ENCODE measurements at regions of chr2 and their contacts with region 1.

Region 1: DNA sequence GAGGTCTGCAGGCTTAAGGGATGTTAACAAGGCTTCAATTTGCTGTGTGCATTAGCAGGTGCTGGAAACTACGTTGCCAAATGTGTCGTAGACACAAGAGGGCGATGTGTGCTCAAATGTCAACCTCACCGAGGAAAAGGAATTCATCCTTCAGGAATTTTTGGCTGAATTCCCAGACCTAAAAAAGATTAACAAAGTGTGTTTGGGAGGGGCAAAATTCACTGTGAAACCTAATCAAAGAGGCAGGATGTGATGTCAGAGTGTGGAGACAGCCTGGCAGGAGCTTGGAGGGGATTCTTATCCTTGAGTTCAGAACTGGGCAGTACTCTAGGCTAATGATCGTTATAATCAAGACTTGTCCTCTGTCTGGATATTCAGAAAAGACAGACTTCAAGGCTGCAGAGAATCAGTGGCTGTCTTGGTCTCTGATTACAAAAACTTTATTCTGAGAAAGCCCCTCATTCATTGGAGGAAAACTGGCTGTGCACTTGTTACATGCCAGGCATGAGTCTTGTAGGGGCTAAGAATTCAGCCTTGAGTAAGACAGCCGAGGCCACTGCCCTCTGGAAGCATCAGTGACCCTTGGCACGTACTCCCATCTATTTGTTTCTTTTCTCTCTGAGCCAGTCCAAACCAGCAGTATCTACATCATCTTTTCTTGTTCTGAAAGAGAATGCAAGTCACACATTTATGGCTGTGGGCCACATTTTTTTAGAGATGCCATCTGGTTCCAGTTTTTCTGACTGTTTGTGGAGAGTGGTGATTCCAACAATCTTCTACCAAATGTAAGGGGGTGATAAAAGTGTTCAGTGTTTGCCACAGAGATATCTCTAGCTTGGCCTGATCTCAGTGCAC is 18.7 kb upstream of the SCYGR1 start:
- DNase-seq: no peak
- ATAC-seq: peak; percentile 67
- H3K4me3 ChIP-seq: no peak overlapping the region
- H3K27ac ChIP-seq: no peak overlapping the region
- H3K4me1 ChIP-seq: peaks cover 14% of the 10 kb centered on the region
- H3K27me3 ChIP-seq: no peaks in the 10 kb centered on the region
- CTCF ChIP-seq: peak; percentile 61 to 90 (median 74)
- EP300 ChIP-seq: no peak
- POLR2A ChIP-seq: no peak
- RAD21 ChIP-seq: peak; percentile 85

Region 2: DNA sequence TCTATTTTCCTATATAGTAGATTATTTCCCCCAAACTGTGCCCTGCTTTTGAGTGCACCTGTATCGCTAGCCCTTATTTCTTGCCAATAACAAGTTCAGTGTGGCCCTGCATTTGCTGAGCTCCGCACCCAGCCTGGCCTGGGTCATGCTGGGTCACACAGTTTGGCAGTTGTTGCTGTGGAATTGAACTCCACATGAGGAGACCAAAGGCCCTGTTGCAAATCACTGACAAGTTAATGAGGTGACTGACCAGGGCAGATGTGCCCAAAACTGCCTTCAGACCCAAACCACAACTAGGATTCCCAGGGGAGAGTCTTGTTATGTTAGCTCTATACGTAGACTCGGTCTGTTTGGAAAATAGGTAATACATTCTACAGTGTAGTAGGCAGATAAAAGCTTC is 273.4 kb before region 1 on chr2:
- CTCF ChIA-PET with region 1: no interaction called
- POLR2A ChIA-PET with region 1: no interaction called
- RAD21 ChIA-PET with region 1: no interaction called
- SMC1A ChIA-PET with region 1: interaction called, 3 read pairs
- in situ Hi-C with region 1: no loop called
- intact Hi-C with region 1: loop called (anchors 10 kb)
- DNase-seq: no peak
- ATAC-seq: no peak
- H3K4me3 ChIP-seq: no peak overlapping the region
- H3K27ac ChIP-seq: no peak overlapping the region
- H3K4me1 ChIP-seq: no peaks in the 10 kb centered on the region
- H3K27me3 ChIP-seq: no peaks in the 10 kb centered on the region
- CTCF ChIP-seq: no peak
- EP300 ChIP-seq: no peak
- POLR2A ChIP-seq: no peak
- RAD21 ChIP-seq: no peak

Region 3: DNA sequence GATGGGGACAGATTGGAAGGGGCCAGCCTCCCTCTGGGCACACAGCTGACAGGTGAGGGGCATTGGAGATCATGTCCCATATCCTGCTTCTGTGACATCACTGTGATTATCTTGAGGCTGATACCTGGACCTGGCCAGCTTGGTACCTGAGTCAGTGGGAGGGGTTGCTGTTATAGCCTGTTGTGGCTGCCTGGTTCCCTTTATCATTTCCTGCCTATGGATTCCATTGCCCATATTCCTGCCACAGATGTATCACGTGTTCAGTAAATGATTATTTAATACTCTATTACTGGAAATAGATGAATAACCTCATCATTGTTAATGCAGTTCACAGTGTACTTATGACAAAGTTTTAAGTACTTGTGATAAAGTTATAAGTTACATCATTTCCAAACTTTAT is 10.8 kb before region 1 on chr2:
- CTCF ChIA-PET with region 1: interaction called, 27 read pairs
- POLR2A ChIA-PET with region 1: no interaction called
- RAD21 ChIA-PET with region 1: interaction called, 3 read pairs
- SMC1A ChIA-PET with region 1: interaction called, 16 read pairs
- in situ Hi-C with region 1: no loop called
- intact Hi-C with region 1: no loop called
- DNase-seq: no peak
- ATAC-seq: peak; percentile 40
- H3K4me3 ChIP-seq: no peak overlapping the region
- H3K27ac ChIP-seq: no peak overlapping the region
- H3K4me1 ChIP-seq: no peaks in the 10 kb centered on the region
- H3K27me3 ChIP-seq: no peaks in the 10 kb centered on the region
- CTCF ChIP-seq: no peak
- EP300 ChIP-seq: no peak
- POLR2A ChIP-seq: no peak
- RAD21 ChIP-seq: no peak

Region 4: DNA sequence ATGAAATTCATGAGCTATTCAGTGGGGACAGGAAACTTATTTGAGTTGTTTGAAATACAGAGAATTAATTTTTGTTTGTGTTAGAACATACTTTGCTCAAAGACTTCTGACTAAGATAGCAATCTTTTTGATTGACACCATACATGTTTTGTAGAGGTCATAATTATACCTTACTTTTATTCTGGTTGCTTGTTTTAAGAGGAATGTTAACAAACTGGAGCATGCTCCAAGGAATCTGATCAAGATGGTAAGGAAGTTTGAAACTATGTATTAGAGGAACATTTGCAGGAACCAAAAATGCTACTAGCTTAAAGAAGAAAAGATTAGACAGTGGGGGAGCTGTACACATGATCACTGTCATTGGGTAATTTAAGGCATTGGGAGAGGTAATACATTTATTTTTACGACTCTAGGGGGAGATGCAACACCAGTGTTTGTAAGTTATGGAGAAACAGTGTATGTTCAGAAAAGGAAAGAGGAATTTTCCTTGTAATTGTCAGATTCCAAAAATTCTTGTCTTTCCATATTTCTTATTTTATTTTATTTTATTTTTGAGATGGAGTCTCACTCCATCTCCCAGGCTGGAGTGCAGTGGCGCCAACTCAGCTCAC is 73.6 kb after region 1 on chr2:
- CTCF ChIA-PET with region 1: interaction called, 127 read pairs
- POLR2A ChIA-PET with region 1: interaction called, 3 read pairs
- RAD21 ChIA-PET with region 1: interaction called, 61 read pairs
- SMC1A ChIA-PET with region 1: interaction called, 56 read pairs
- in situ Hi-C with region 1: no loop called
- intact Hi-C with region 1: no loop called
- DNase-seq: no peak
- ATAC-seq: peak; percentile 64
- H3K4me3 ChIP-seq: peak overlapping the region; percentile 12; the same call in 1 of the 2 replicates
- H3K27ac ChIP-seq: peak overlapping the region; percentile 68
- H3K4me1 ChIP-seq: peaks cover 32% of the 10 kb centered on the region
- H3K27me3 ChIP-seq: no peaks in the 10 kb centered on the region
- CTCF ChIP-seq: peak; percentile 28 to 65 (median 56); a peak in 5 of 6 replicates
- EP300 ChIP-seq: no peak
- POLR2A ChIP-seq: no peak
- RAD21 ChIP-seq: peak; percentile 65

Region 5: DNA sequence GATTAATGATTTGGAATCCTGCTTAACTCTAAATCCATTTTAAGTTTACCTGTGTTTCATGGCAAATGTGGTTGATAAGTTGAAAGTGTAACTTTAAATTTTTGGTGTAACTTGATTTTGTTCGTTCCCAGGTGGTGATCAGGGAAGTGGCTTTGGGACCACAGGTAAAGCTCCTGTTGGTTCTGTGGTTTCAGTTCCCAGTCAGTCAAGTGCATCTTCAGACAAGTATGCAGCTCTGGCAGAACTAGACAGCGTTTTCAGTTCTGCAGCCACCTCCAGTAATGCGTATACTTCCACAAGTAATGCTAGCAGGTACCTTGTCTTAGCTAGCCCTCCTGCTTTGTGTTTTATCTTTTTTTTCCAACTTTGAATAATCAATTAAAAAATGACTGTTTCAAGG is 128.3 kb after region 1 on chr2:
- CTCF ChIA-PET with region 1: interaction called, 19 read pairs
- POLR2A ChIA-PET with region 1: no interaction called
- RAD21 ChIA-PET with region 1: interaction called, 3 read pairs
- SMC1A ChIA-PET with region 1: interaction called, 8 read pairs
- in situ Hi-C with region 1: no loop called
- intact Hi-C with region 1: loop called (anchors 5 kb)
- DNase-seq: peak; percentile 40
- ATAC-seq: peak; percentile 86
- H3K4me3 ChIP-seq: no peak overlapping the region
- H3K27ac ChIP-seq: no peak overlapping the region
- H3K4me1 ChIP-seq: peaks cover 18% of the 10 kb centered on the region
- H3K27me3 ChIP-seq: no peaks in the 10 kb centered on the region
- CTCF ChIP-seq: no peak
- EP300 ChIP-seq: no peak
- POLR2A ChIP-seq: no peak
- RAD21 ChIP-seq: no peak

Region 6: DNA sequence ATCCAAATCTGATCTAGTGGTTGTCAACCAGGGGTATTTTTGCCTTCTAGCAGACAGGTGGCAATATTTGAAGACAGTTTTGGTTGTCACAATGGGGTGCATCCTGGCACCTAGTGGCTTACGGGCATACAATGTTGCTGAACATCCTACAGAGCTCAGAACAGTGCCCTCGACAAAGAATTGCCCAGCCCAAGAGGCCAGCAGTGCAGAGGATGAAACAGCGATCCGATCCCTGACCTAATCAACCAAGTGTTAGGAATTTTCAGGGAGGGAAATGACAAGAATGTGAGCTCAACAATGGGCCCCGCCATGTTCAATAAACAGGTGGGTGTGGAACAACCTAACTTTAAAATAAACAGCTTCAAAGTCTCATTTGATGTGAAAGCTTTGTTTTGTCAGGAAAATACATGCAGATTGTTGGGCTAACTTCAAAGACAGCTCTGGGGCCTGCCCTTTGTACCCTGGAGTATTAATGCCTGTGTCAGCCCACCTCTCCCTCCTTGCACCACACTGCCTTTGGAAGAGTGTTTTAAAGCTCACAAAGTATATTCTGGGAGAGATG is 237.7 kb after region 1 on chr2:
- CTCF ChIA-PET with region 1: interaction called, 19 read pairs
- POLR2A ChIA-PET with region 1: no interaction called
- RAD21 ChIA-PET with region 1: interaction called, 4 read pairs
- SMC1A ChIA-PET with region 1: no interaction called
- in situ Hi-C with region 1: no loop called
- intact Hi-C with region 1: no loop called
- DNase-seq: no peak
- ATAC-seq: peak; percentile 64
- H3K4me3 ChIP-seq: no peak overlapping the region
- H3K27ac ChIP-seq: no peak overlapping the region
- H3K4me1 ChIP-seq: no peaks in the 10 kb centered on the region
- H3K27me3 ChIP-seq: peaks cover 0 to 1% of the 10 kb centered on the region in 2 experiments; a peak in 1 of 4 replicates
- CTCF ChIP-seq: peak in 1 of 3 experiments; percentile 31; a peak in 1 of 6 replicates
- EP300 ChIP-seq: no peak
- POLR2A ChIP-seq: no peak
- RAD21 ChIP-seq: no peak

Region 7: DNA sequence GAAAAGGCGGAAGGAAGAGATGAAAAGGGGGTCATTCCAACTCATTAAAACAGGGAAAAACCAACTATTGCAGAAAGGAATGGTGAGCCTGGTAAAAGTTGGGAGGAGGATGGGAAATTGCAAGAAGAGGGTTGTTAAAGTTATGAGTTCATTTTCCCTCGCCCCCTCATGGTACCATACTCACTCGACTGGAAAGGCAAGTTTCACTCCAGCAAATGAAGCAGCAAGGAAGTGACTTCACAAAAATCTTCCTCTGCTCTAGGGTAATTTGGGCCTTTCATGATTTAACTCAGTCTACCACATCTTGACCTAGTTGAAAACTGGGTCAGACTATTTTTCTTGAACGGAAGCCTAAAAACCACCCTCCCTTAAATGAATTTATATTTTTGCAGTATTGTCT is 442.2 kb after region 1 on chr2:
- CTCF ChIA-PET with region 1: no interaction called
- POLR2A ChIA-PET with region 1: no interaction called
- RAD21 ChIA-PET with region 1: interaction called, 3 read pairs
- SMC1A ChIA-PET with region 1: no interaction called
- in situ Hi-C with region 1: no loop called
- intact Hi-C with region 1: loop called (anchors 10 kb)
- DNase-seq: peak; percentile 80
- ATAC-seq: peak; percentile 95
- H3K4me3 ChIP-seq: peak overlapping the region; percentile 20; the same call in 1 of the 2 replicates
- H3K27ac ChIP-seq: peak overlapping the region; percentile 38
- H3K4me1 ChIP-seq: peaks cover 8% of the 10 kb centered on the region; the same call in 1 of the 2 replicates
- H3K27me3 ChIP-seq: no peaks in the 10 kb centered on the region
- CTCF ChIP-seq: no peak
- EP300 ChIP-seq: 0 out of 4 replicates have a peak, but pooled peaks of 1 of the 2 experiments have one; percentile 50
- POLR2A ChIP-seq: no peak
- RAD21 ChIP-seq: no peak

Region 8: DNA sequence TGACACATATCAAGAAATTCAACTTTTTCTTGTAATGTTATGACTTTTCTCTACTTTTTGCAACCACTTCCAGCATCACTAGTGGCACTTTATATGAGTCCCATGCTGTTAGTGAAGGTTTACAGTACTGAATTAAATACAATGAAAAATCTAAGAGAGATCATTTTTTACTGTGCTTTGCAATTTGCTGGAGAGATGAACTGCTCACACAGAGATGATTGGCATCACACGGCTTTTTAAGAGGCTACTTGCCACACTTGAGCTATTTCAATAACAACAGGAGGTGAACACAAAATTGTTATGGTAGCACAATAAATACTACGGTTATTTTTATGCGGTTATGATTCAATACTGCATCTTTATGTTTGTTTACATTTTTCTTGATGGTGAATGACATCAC is 553.9 kb after region 1 on chr2:
- CTCF ChIA-PET with region 1: no interaction called
- POLR2A ChIA-PET with region 1: no interaction called
- RAD21 ChIA-PET with region 1: no interaction called
- SMC1A ChIA-PET with region 1: no interaction called
- in situ Hi-C with region 1: no loop called
- intact Hi-C with region 1: no loop called
- DNase-seq: no peak
- ATAC-seq: no peak
- H3K4me3 ChIP-seq: no peak overlapping the region
- H3K27ac ChIP-seq: no peak overlapping the region
- H3K4me1 ChIP-seq: no peaks in the 10 kb centered on the region
- H3K27me3 ChIP-seq: no peaks in the 10 kb centered on the region
- CTCF ChIP-seq: no peak
- EP300 ChIP-seq: no peak
- POLR2A ChIP-seq: no peak
- RAD21 ChIP-seq: no peak

Measured in GM12878 (cell line).